GM10248 (cell line): ENCODE measurements at regions of chr3 and their contacts with region 1.

Region 1: GRCh38 chr3:113736548-113737089 is 9.4 kb downstream of the NAA50 start:
- DNase-seq: peak; percentile 40
- CTCF ChIP-seq: peak; percentile 65

Region 2: GRCh38 chr3:113721636-113722035 is 15.0 kb before region 1 on chr3:
- CTCF ChIA-PET with region 1: interaction called, 35 read pairs
- POLR2A ChIA-PET with region 1: no interaction called
- DNase-seq: no peak
- CTCF ChIP-seq: no peak

Region 3: DNA sequence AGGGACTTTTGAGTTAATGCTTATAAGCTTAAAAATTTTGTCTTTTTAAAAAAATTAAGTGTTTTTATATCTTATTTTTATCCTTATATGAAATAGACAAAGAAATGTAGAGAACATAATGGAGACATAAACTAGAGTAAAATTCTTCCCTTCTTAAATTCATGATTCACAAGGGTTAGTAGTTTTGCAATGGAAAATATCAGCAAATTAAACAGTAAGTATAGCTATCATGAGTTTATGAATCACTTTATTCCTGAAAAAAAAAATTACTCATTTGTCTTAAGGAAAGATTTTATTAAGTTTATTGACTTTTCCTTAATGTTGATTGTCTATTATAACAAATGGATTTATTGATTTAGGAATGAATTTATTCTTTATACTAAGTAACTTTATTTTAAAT is 14.5 kb after region 1 on chr3:
- CTCF ChIA-PET with region 1: interaction called, 64 read pairs
- POLR2A ChIA-PET with region 1: no interaction called
- DNase-seq: no peak
- CTCF ChIP-seq: no peak

Region 4: DNA sequence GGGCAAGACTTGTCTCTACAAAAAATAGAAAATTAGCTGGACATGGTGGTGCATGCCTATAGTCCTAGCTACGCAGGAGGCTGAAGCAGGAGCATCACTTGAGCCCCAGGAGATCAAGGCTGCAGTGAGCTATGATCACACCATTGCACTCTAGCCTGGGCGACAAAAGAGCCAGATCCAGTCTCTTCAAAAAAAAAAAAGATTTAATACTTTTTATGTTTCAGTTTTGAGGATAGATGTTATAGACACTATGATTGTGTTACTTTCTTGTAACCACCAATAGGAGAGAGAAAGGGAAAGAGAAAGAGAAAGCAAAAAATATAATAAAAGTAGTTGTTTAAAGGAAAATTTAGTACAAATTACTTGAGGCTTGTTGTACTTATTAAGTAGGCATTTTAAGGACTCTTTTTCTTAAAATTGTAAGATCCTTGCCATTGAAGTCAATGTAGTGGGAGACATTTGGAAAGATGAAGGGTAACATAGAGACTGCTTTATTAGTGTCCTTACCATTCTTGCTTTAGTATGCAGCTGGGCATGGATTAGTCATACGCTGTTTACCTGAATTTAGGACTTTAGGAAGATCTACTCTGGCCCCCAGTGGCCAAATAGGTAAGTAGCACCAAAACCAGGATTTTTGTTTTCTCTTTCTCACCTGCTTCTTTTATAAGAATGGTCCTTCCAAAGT is 176.1 kb after region 1 on chr3:
- CTCF ChIA-PET with region 1: interaction called, 33 read pairs
- POLR2A ChIA-PET with region 1: no interaction called
- DNase-seq: peak; percentile 56
- CTCF ChIP-seq: peak; percentile 71

Region 5: DNA sequence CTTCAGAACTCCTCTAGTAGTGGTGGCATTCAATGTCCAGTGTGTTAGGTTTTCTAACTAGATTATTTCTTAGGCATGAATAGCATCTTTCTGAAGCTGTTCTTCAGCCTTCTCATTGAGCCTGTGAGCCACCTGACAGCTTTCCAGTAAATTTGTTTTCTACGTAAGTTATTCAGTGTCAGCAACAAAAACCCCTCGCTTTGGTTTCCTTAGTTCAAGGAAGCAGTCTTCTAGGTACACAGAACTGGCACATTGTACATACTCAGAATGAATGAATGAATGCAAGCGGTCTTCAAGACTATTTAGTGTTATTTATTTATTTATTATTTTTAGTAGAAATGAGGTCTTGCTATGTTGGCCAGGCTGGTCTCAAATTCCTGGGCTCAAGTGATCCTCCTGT is 397.3 kb after region 1 on chr3:
- CTCF ChIA-PET with region 1: no interaction called
- POLR2A ChIA-PET with region 1: no interaction called
- DNase-seq: no peak
- CTCF ChIP-seq: no peak

Region 6: DNA sequence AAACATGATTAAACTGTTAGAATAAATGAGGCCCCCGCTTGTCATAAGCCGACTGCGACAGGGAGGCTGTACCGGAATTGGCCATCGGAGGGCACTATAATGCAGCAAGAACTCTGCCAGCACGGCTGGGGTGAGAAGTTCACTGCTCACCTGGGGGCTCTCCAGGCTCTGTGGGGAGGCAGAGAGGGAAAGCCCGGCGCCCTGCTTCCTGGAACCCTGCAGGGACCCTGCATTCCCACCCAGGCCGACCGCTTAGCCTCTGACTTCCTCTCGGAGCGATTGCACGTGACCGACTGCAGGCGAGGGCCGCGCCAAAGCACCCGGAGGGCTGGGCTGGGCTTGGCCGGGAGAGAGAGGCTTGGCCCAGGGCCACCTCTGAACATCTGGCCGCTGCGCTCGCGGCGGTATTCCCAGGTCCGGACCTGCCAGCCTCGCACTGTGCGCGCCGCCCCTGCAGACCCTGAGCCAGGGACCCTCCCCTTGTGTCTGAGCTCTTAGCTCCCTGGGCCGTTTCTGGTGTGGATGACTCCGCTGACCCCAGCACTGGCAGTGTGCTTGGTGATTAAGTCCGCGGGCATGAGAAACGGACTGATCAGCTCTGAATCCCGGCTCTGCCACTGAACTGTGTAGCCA is 416.0 kb after region 1 on chr3:
- CTCF ChIA-PET with region 1: interaction called, 15 read pairs
- POLR2A ChIA-PET with region 1: no interaction called
- DNase-seq: peak; percentile 85
- CTCF ChIP-seq: peak; percentile 92